Left ventricle myocardium inferior (tissue), 1 donor: ENCODE measurements at regions of chr5 and their contacts with region 1.

Region 1: DNA sequence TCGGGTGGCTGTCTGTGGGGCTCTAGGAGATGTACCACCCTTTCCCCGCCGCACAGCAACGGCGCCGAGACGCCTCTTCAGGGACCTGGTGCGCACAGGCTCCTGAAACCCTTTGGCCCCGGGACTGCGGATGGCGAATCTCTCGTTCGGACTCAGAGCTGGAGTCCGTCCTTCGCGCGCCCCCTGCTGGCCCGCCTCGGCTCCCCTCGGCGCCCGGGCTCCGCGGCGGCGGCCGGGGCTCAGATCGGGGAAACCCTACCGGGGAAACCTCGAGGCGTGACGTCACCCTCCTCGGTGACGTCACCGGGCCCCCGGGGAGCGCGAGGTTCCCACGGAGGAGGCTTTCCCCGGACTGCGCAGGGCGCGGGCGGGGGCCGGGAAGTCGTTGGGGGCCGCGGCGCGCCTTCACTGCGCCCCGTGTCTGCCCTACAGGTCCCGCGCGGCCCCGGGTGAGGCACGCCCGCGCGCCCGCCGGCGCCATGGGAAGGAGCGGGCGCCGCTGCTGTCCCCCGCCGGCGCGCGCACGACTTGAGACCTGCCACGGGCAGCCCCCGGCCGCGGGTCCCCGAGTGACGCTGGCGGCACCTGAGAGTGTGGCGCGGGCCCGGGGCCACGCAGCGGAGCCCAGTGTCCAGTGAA is 7.9 kb downstream of the PRR7 start:
- DNase-seq: peak; percentile 91
- H3K4me3 ChIP-seq: peak overlapping the region; percentile 75
- H3K27ac ChIP-seq: peak overlapping the region; percentile 81
- H3K4me1 ChIP-seq: peaks cover 50% of the 10 kb centered on the region
- H3K27me3 ChIP-seq: peaks cover 36% of the 10 kb centered on the region
- CTCF ChIP-seq: peak; percentile 92

Region 2: GRCh38 chr5:175809531-175810121 is 1644.9 kb before region 1 on chr5:
- intact Hi-C with region 1: no loop called
- DNase-seq: no peak
- H3K4me3 ChIP-seq: no peak overlapping the region
- H3K27ac ChIP-seq: no peak overlapping the region
- H3K4me1 ChIP-seq: no peaks in the 10 kb centered on the region
- H3K27me3 ChIP-seq: peaks cover 81% of the 10 kb centered on the region
- CTCF ChIP-seq: no peak

Region 3: DNA sequence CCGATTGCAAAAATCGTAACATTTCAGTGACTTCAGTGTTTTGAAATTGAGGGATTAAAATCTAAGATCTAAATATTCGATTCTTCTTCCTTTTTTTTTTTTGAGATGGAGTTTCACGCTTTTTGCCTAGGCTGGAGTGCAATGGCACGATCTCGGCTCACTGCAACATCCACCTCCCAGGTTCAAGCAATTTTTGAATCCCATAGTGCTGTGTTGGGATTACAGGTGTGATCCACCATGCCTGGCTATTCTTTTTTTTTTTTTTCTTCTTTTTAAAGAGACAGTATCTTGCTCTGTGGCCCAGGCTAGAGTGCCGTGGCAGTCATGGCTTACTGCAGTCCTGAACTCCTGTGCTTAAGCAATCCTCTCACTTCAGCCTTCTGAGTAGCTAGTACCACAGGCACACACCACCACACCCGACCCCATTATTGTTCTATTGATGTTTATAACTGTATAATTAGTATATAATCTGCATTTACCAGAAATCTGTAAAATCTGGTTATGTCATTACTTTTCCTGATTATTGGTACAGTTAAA is 278.3 kb before region 1 on chr5:
- intact Hi-C with region 1: no loop called
- DNase-seq: no peak
- H3K4me3 ChIP-seq: no peak overlapping the region
- H3K27ac ChIP-seq: no peak overlapping the region
- H3K4me1 ChIP-seq: peaks cover 26% of the 10 kb centered on the region
- H3K27me3 ChIP-seq: no peaks in the 10 kb centered on the region
- CTCF ChIP-seq: no peak

Region 4: DNA sequence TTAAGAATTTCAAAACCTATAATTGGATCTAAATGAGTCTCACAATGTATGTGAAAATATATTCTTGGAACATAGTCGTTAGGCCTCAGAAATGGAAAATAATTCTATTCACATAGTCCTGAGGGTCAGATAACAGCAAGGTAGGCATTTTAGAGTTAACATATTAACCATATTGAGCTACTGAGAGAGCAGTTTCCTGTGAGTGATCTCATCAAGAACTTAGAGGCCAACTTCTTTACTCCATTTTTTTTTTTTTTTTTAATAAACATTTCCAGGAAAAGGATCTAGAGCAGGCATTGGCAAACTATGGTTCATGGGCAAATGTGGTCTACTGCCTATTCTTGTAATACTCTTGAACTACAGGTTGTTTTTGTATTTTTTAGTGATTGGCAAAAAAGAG is 177.6 kb before region 1 on chr5:
- intact Hi-C with region 1: no loop called
- DNase-seq: no peak
- H3K4me3 ChIP-seq: no peak overlapping the region
- H3K27ac ChIP-seq: no peak overlapping the region
- H3K4me1 ChIP-seq: no peaks in the 10 kb centered on the region
- H3K27me3 ChIP-seq: no peaks in the 10 kb centered on the region
- CTCF ChIP-seq: no peak

Region 5: DNA sequence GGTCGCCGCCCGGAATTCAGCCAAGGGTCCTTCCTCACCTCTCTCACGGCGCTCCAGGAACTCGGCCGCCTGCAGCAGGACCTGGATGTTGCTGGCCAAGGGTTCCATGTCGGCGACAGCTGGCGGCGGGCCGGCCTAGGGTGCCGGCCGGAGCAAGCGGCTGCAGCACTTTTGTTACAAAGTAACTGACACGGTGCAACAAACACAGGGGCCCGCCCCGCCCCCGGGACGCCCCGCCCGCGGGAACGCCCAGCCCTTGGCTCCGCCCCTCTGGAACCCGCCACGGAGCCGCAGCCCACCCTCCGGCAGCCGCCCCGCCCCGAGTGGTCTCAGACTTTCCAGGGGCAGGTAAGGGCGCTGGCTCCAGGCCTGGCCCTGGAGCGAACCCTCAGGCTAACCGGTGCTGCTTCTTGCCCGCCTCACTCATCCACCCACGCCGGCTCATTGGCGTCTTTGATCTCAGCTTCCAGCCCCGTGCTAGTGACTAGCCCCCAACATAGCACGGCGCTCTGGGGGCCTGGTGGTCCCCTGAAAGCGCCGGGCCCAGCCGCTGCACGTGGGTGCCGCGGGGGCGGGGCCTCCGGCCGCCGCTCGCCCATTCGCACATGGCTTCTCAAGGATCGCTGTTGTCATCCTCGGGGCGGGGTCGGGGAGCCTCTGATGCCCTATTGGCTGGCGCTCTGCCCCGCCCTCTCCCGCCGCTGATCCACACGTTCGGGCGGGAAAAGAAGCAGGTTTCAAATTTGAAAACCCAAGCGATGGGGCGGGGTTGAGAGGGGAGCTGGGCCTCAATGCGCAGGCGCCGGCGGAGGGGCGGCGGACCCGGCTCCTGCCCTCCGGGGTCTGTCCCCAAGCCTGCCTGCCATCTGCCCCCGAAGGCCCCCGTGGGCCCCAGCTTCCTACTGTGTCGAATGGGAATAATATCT is 142.5 kb before region 1 on chr5 and contains the start of gene MXD3:
- intact Hi-C with region 1: loop called (anchors 10 kb)
- DNase-seq: peak; percentile 98
- H3K4me3 ChIP-seq: peak within 1 kb of the TSS; percentile 70
- H3K27ac ChIP-seq: no peak within 1 kb of the TSS
- H3K4me1 ChIP-seq: peaks cover 42% of the 10 kb centered on the region
- H3K27me3 ChIP-seq: no peaks in the 10 kb centered on the region
- CTCF ChIP-seq: no peak
- total RNA-seq, gene MXD3: 2.3 TPM

Region 6: GRCh38 chr5:177403792-177404640 is 50.5 kb before region 1 on chr5:
- intact Hi-C with region 1: loop called (anchors 5 kb)
- DNase-seq: peak; percentile 86
- H3K4me3 ChIP-seq: peak overlapping the region; percentile 74
- H3K27ac ChIP-seq: no peak overlapping the region
- H3K4me1 ChIP-seq: peaks cover 39% of the 10 kb centered on the region
- H3K27me3 ChIP-seq: peaks cover 99% of the 10 kb centered on the region
- CTCF ChIP-seq: peak; percentile 78